Right lobe of liver (tissue), 6 donors: ENCODE measurements at regions of chr20 and their contacts with region 1.

Region 1: DNA sequence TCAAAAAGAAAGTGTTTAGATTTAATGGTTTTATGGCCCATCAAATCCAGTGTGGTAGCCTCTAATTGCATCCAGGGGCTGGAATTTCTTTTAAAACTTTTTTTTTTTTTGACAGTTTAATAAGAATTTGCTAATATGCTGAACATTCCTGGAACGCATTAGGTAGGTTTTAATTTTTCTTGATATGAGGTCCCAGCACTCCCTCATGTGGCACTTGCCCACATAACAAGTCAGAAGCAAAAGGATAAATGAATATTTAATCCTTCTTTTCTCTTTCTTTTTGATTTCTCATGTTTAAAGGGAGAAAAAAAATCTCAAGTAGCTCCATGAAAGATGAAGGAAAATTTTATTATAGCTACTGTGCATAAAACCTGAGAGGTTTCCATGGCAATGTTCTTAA is 13.5 kb downstream of the HAO1 start:
- DNase-seq: no peak
- ATAC-seq: peak in 1 of 4 donors; percentile 50
- H3K4me3 ChIP-seq: no peak overlapping the region
- H3K27ac ChIP-seq: no peak overlapping the region
- H3K4me1 ChIP-seq: peaks cover 0 to 6% (median 0%) of the 10 kb centered on the region in 4 donors
- H3K27me3 ChIP-seq: no peaks in the 10 kb centered on the region
- CTCF ChIP-seq: peak; percentile 25 to 42 (median 39)
- POLR2A ChIP-seq: no peak

Region 2: DNA sequence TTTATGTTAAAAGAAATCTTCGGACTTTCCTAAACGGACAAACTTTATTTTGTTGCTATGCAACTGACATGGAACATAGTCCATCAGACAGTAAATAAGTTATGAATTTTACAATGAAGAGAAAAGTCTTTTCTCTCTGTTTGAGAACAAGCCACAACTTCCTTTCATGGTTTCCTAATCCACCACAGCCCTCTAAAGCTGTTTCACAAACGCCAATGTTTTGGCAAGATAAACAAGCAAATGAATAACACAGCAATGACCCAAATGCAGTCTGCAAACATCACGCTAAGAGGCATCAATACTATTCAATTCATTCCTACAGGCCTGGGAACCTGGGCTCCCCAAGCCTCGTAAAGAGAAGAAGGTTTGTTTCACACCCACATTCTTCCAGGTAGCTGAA is 46.9 kb before region 1 on chr20:
- intact Hi-C with region 1: loop called in 1 of 2 experiments (anchors 10 kb)
- DNase-seq: no peak
- ATAC-seq: peak; percentile 81 to 89 (median 81)
- H3K4me3 ChIP-seq: no peak overlapping the region
- H3K27ac ChIP-seq: peak overlapping the region; percentile 3 to 22 (median 9)
- H3K4me1 ChIP-seq: peaks cover 0 to 26% (median 8%) of the 10 kb centered on the region in 4 donors
- H3K27me3 ChIP-seq: no peaks in the 10 kb centered on the region
- CTCF ChIP-seq: no peak
- POLR2A ChIP-seq: no peak

Region 3: GRCh38 chr20:7967199-7967844 is 40.6 kb after region 1 on chr20:
- intact Hi-C with region 1: no loop called
- DNase-seq: no peak
- ATAC-seq: peak in 3 of 4 donors; percentile 60 to 95 (median 88)
- H3K4me3 ChIP-seq: no peak overlapping the region
- H3K27ac ChIP-seq: peak overlapping the region in 1 of 3 donors; percentile 40
- H3K4me1 ChIP-seq: no peaks in the 10 kb centered on the region
- H3K27me3 ChIP-seq: no peaks in the 10 kb centered on the region
- CTCF ChIP-seq: no peak
- POLR2A ChIP-seq: no peak